Activated T-helper 1 cell treated with anti-CD3 and anti-CD28 coated beads, Interleukin-12 subunit alpha, Interleukin-12 subunit beta, Interleukin-2, Interleukin-4 antibody, amounts not matched to agents 30 ng/mL and 10 ng/mL and 1 ng/mL, durations not matched to agents 14 hours and 24 hours and 36 hours (primary cell): ENCODE measurements at regions of chr6 and their contacts with region 1.

Region 1: GRCh38 chr6:195861-196360 is 96.4 kb upstream of the DUSP22 start:
- DNase-seq: peak; percentile 43
- H3K4me3 Mint-ChIP-seq: no peak overlapping the region
- H3K27ac Mint-ChIP-seq: peak overlapping the region; percentile 24
- H3K4me1 Mint-ChIP-seq: peaks cover 56% of the 10 kb centered on the region
- H3K27me3 Mint-ChIP-seq: peaks cover 5% of the 10 kb centered on the region

Region 2: DNA sequence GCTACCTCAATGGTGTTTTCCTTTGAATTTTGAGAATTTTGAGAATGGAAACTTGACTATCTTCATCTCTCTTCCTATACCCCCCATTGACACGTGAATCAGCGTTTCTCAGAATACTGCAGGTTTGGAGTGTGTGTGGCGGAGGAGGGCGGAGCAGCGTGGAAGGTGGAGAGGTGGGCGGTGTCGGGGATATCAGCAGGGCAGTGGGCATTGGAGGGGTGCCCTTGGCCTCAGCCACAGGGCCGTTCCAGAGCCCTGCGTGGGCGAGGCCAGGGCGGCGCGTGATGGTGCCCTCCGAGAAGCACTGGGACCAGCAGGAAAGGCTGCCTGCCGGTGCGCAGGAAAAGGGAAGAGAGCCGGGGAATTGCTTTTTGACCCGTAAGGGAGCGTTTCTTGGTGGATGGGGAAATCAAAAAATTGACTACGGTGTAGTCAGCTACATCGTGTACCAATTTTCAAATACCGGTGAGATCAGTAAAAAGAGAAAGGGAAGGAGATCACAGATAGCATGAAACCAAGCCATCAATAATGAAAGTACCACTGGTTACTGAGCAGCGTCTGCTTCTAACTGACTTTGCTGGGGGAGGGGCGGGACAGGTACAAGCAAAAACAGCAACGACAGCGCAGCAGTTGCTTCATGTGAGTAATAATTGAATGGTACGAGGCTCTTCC is 13.7 kb after region 1 on chr6:
- intact Hi-C with region 1: loop called (anchors 1 kb)
- DNase-seq: peak; percentile 37
- H3K4me3 Mint-ChIP-seq: peak overlapping the region; percentile 68
- H3K27ac Mint-ChIP-seq: peak overlapping the region; percentile 53
- H3K4me1 Mint-ChIP-seq: peaks cover 42% of the 10 kb centered on the region
- H3K27me3 Mint-ChIP-seq: peaks cover 17% of the 10 kb centered on the region

Region 3: DNA sequence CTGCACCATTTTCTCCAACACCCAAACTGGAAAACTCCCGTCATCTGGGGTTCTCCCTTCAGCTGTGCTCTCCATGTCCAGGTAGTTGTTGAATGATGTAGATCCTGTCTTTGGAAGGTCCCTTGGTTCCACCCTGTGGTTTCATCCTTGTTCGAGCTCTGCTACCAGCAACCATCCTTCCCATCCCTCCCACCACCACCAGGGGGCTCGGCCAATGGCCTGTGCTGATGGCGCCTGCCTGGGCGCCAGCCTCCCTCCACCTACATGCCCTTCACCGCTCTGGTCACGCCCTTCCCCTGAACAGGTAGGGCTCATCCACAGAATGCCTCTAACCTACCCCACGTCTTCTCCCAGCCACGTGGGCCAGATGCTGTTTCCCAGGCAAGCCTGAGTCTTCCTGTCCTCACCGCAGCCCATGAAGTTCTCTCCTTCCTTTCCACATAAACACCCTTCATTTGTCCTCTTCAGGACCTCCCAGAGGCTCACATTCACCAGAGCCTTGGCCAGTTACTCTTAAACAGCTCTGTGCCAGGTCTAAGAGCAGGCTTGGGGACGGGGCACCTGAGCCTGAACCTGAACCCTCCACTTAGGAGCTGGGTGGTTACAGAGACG is 21.2 kb after region 1 on chr6:
- intact Hi-C with region 1: loop called (anchors 1 kb)
- DNase-seq: no peak
- H3K4me3 Mint-ChIP-seq: no peak overlapping the region
- H3K27ac Mint-ChIP-seq: no peak overlapping the region
- H3K4me1 Mint-ChIP-seq: peaks cover 53% of the 10 kb centered on the region
- H3K27me3 Mint-ChIP-seq: peaks cover 5% of the 10 kb centered on the region

Region 4: DNA sequence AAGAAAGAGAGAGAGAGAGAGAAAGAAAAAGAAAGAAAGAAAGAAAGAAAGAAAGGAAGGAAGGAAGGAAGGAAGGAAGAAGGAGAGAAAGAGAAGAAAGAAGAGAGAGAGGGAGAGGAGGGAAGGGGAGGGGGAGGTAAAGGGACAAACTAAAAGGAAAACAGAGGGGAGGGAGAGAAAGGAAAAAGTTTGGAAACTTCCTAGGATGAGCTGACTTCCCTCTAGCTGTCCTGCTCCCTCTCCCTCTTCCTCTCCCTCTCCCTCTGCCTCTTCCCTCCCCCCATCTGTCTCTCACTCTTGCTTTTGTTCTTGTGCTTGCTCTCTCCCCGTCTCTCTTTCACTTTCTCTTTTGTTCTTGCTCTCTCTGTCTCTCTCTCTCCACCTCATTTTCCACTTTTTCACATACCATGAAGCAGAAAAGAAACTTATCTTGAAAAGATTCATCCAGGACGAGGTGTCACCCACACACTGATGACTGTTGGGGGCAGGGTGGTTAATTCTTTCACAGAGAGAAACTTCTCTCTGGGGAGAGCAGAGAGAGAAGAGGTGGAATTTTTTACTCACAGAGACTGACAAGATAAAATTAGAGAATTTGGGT is 40.0 kb after region 1 on chr6:
- intact Hi-C with region 1: loop called (anchors 1 kb)
- DNase-seq: peak; percentile 41
- H3K4me3 Mint-ChIP-seq: peak overlapping the region; percentile 56
- H3K27ac Mint-ChIP-seq: peak overlapping the region; percentile 88
- H3K4me1 Mint-ChIP-seq: peaks cover 57% of the 10 kb centered on the region
- H3K27me3 Mint-ChIP-seq: no peaks in the 10 kb centered on the region

Region 5: DNA sequence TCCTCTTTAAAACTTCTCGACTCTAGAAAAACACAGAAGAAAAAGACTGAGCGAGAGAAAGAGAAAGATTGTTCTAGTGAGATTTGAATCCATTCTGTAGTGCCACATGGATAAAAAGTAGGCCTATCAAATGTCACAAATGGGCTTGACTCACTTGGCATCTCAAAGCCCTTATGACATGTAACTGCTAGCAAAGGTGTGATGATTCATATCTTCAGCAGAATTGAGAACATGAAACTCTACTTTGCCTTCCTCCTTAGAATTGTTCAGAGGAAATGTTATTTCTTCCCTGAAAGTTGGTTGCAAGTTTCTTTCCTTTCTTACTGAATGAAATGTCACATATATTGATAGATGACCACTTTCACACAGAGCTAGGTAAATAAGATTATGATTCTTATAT is 56.0 kb after region 1 on chr6:
- intact Hi-C with region 1: loop called (anchors 1 kb)
- DNase-seq: no peak
- H3K4me3 Mint-ChIP-seq: peak overlapping the region; percentile 48
- H3K27ac Mint-ChIP-seq: peak overlapping the region; percentile 90
- H3K4me1 Mint-ChIP-seq: peaks cover 38% of the 10 kb centered on the region
- H3K27me3 Mint-ChIP-seq: peaks cover 3% of the 10 kb centered on the region

Region 6: DNA sequence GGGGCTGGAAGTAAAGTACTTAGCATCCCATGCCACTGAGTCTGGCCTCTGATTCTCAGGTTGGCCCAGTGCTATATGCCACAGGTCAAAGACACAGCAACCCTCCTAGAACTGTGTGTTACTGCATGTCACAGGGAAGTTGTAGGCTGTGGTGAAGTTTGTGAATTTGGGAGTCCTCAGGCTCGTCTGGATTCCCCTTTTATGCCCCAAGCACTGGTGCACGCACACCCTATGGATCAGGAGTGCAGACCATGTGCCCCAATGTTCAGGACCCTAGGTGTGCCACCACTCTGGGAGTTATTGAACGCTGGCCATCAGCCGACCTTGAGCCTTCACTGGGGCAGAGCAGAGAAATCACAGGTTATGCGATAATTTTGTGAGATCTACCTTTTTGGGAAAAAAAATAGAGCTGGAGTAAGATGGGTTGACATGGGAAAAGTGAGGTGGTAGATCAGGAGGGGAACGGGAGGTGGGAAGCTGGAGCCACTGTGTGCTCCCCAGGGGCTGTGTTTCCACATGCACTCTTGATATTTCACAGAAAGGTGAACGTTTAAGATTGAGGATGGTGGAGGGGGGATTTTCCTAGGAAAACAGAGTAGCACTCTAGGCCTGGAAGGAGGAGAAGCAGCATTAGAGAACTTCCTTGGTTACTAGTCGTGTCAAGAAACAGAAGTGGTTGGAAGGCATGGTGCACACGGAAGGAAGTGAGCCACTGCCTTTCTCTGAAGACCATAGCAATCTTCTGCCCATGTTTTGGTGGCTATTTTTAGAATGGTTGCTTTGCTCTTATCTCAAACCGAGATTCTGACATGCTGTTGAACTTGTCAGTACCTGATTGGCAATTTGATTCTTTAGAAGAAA is 140.5 kb after region 1 on chr6:
- intact Hi-C with region 1: loop called (anchors 1 kb)
- DNase-seq: no peak
- H3K4me3 Mint-ChIP-seq: peak overlapping the region; percentile 21
- H3K27ac Mint-ChIP-seq: peak overlapping the region; percentile 57
- H3K4me1 Mint-ChIP-seq: peaks cover 54% of the 10 kb centered on the region
- H3K27me3 Mint-ChIP-seq: no peaks in the 10 kb centered on the region

Region 7: DNA sequence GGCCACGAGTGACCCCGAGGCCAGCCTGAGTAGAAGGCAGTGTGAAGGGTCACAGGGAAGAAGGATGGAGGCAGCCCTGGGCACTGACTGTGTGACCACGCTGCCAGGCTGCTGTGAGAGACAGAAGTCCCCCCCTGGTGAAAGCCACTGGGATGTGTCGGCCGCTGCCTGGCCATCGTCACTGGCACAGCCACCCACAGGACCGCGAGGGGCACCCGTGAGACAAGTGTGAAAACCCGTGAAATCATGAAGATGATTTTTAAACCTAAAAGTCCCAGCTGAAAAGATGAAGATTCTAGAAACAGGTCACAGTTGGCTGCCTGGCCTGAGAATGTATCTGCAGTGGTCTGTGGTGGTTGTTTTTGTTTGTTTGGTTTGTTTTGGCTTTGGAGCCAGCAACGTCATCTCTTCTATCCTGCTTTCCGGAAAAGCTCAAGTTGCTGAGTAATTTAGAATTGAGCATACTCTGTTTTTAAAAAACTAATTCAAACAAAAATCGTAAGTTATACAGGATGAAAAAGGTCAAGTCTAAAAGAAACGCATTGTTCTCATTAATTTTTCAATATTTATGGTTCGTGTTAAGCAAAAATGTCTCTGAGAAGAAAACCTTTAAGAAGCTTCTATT is 366.3 kb after region 1 on chr6:
- intact Hi-C with region 1: no loop called
- DNase-seq: no peak
- H3K4me3 Mint-ChIP-seq: no peak overlapping the region
- H3K27ac Mint-ChIP-seq: peak overlapping the region; percentile 18
- H3K4me1 Mint-ChIP-seq: peaks cover 43% of the 10 kb centered on the region
- H3K27me3 Mint-ChIP-seq: no peaks in the 10 kb centered on the region